PC-9 (cell line): ENCODE measurements at regions of chr6 and their contacts with region 1.

Region 1: GRCh38 chr6:44002593-44003344 is 124.5 kb downstream of the MRPL14 start:
- DNase-seq: no peak
- H3K4me3 ChIP-seq: peak overlapping the region; percentile 68; the same call in 1 of the 2 replicates
- H3K27ac ChIP-seq: peak overlapping the region; percentile 93
- H3K4me1 ChIP-seq: peaks cover 65% of the 10 kb centered on the region
- H3K27me3 ChIP-seq: no peaks in the 10 kb centered on the region
- CTCF ChIP-seq: no peak

Region 2: GRCh38 chr6:43774776-43775534 is 227.8 kb before region 1 on chr6:
- CTCF ChIA-PET with region 1: interaction called, 3 read pairs
- POLR2A ChIA-PET with region 1: no interaction called
- intact Hi-C with region 1: loop called (anchors 2 kb)
- DNase-seq: peak; percentile 65 to 71
- H3K4me3 ChIP-seq: peak overlapping the region; percentile 90
- H3K27ac ChIP-seq: peak overlapping the region; percentile 94; the same call in 1 of the 2 replicates
- H3K4me1 ChIP-seq: peaks cover 35% of the 10 kb centered on the region
- H3K27me3 ChIP-seq: no peaks in the 10 kb centered on the region
- CTCF ChIP-seq: peak; percentile 85

Region 3: GRCh38 chr6:43838276-43839036 is 164.3 kb before region 1 on chr6:
- CTCF ChIA-PET with region 1: no interaction called
- POLR2A ChIA-PET with region 1: no interaction called
- intact Hi-C with region 1: loop called (anchors 10 kb)
- DNase-seq: peak; percentile 39 to 57
- H3K4me3 ChIP-seq: no peak overlapping the region; the same call in 1 of the 2 replicates
- H3K27ac ChIP-seq: peak overlapping the region; percentile 73
- H3K4me1 ChIP-seq: peaks cover 36% of the 10 kb centered on the region
- H3K27me3 ChIP-seq: no peaks in the 10 kb centered on the region
- CTCF ChIP-seq: peak; percentile 85

Region 4: GRCh38 chr6:44041461-44042260 is 38.9 kb after region 1 on chr6:
- CTCF ChIA-PET with region 1: no interaction called
- POLR2A ChIA-PET with region 1: no interaction called
- intact Hi-C with region 1: loop called (anchors 5 kb)
- DNase-seq: peak; percentile 86 to 94
- H3K4me3 ChIP-seq: peak overlapping the region; percentile 49; the same call in 1 of the 2 replicates
- H3K27ac ChIP-seq: peak overlapping the region; percentile 99
- H3K4me1 ChIP-seq: peaks cover 82% of the 10 kb centered on the region
- H3K27me3 ChIP-seq: no peaks in the 10 kb centered on the region
- CTCF ChIP-seq: no peak; the same call in 1 of the 2 replicates

Region 5: GRCh38 chr6:44084231-44085014 is 81.7 kb after region 1 on chr6:
- CTCF ChIA-PET with region 1: no interaction called
- POLR2A ChIA-PET with region 1: interaction called, 11 read pairs
- intact Hi-C with region 1: no loop called
- DNase-seq: no peak
- H3K4me3 ChIP-seq: no peak overlapping the region
- H3K27ac ChIP-seq: no peak overlapping the region
- H3K4me1 ChIP-seq: peaks cover 14% of the 10 kb centered on the region
- H3K27me3 ChIP-seq: no peaks in the 10 kb centered on the region
- CTCF ChIP-seq: no peak

Region 6: GRCh38 chr6:44251576-44252524 is 249.1 kb after region 1 on chr6:
- CTCF ChIA-PET with region 1: no interaction called
- POLR2A ChIA-PET with region 1: interaction called, 14 read pairs
- intact Hi-C with region 1: no loop called
- DNase-seq: peak in 1 of 2 experiments; percentile 31
- H3K4me3 ChIP-seq: no peak overlapping the region
- H3K27ac ChIP-seq: peak overlapping the region; percentile 37
- H3K4me1 ChIP-seq: peaks cover 53% of the 10 kb centered on the region
- H3K27me3 ChIP-seq: no peaks in the 10 kb centered on the region
- CTCF ChIP-seq: no peak